ENCODE measurements at regions of chr16 and their contacts with region 1.

Region 1: GRCh38 chr16:50210266-50211038 is 55.9 kb upstream of the ADCY7 start:
- DNase-seq: peak; percentile 70
- CTCF ChIP-seq: peak; percentile 79

Region 2: GRCh38 chr16:50065624-50066481 is 144.6 kb before region 1 on chr16 and contains the start of gene HEATR3:
- CTCF ChIA-PET with region 1: interaction called, 186 read pairs
- POLR2A ChIA-PET with region 1: no interaction called
- DNase-seq: peak; percentile 94
- CTCF ChIP-seq: no peak

Region 3: DNA sequence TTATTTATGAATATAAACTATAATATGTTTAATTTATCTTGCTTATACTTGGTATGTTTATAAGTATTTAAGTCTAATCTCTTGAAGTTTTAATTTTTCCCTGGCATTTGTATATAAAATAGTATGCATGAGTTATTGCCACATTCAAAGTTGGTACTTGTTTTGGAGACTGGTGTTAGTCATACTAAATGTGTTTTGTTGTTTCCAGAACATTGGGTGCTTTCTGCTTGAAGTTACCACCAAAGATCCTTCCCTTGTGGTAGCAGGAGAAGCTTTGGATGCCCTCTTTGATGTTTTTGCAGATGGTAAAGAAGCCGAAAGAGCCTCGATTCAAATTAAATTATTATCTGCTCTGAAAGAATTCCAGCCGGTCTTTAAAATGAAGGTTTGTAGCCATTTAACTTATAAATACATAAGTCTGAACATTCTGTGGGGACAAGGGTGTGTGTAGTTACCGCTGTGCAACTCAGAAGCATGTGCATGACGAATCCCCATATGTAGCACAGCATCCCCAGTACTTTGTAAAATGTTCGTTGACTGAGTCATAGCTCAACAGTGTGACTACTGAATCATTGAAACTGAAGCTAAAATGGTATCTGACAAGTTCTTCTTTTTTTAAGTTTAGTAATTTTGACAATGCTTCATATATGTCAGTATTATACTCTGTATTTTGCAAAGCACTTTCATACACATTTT is 108.3 kb before region 1 on chr16:
- CTCF ChIA-PET with region 1: interaction called, 10 read pairs
- POLR2A ChIA-PET with region 1: no interaction called
- DNase-seq: peak; percentile 50
- CTCF ChIP-seq: no peak

Region 4: GRCh38 chr16:50136399-50136798 is 74.1 kb before region 1 on chr16:
- CTCF ChIA-PET with region 1: interaction called, 25 read pairs
- POLR2A ChIA-PET with region 1: no interaction called
- DNase-seq: no peak
- CTCF ChIP-seq: peak; percentile 31

Region 5: DNA sequence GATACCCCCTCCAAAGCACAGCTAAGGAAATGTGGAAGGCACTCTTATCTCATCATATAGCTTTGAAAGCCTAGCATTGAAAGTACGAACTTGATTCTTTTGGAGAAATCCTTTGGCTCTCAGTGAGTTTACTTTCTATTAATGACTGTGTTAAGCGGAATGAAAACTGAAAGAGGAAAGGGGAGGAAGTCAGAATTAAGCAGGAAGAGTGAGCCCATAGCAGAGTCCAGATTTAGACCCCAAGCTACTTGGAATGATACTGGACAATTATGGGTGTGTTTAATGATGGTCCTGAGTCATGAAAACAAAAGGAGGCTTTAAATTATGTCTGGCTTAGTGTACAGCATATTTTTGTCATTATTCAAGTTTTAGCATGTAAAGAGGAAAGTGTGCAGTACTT is 15.2 kb before region 1 on chr16:
- CTCF ChIA-PET with region 1: interaction called, 97 read pairs
- POLR2A ChIA-PET with region 1: no interaction called
- DNase-seq: no peak
- CTCF ChIP-seq: no peak

Region 6: GRCh38 chr16:50273681-50274325 is 63.4 kb after region 1 on chr16:
- CTCF ChIA-PET with region 1: interaction called, 20 read pairs
- POLR2A ChIA-PET with region 1: no interaction called
- DNase-seq: peak; percentile 88
- CTCF ChIP-seq: no peak

Region 7: DNA sequence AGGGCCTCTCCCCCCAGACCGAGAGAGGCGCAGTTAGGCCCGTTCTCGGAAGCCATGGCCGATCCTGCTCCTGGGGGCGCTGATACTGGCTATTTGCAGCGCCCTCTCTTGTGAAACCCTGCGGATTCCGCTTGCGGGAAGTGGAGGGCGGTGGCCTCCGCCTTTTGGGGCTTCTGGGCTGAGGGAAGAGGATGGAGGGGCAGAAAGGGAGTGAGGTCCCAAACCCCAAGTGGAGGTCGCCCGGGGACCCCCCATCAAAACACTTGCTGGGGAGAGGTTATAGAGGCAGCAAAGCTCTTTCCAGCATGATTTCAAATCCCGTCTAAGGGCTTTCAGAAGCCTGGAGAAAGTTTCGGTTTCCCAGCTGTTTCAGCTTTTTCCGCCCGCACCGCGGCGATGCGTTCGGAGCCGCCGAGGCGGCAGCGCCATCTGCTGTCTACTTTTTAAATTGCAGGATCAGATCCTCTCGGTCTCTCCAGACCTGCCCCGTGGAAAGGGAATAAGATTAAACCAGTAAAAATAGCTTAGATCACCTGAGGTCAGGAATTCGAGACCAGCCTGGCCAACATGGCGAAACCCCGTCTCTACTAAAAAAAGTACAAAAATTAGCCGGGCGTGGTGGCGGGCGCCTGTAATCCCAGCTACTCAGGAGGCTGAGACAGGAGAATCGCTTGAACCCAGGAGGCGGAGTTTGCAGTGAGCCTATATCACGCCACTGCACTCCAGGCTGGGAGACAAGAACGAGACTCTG is 454.9 kb after region 1 on chr16:
- CTCF ChIA-PET with region 1: interaction called, 37 read pairs
- POLR2A ChIA-PET with region 1: no interaction called
- DNase-seq: peak; percentile 78
- CTCF ChIP-seq: peak; percentile 75

Region 8: DNA sequence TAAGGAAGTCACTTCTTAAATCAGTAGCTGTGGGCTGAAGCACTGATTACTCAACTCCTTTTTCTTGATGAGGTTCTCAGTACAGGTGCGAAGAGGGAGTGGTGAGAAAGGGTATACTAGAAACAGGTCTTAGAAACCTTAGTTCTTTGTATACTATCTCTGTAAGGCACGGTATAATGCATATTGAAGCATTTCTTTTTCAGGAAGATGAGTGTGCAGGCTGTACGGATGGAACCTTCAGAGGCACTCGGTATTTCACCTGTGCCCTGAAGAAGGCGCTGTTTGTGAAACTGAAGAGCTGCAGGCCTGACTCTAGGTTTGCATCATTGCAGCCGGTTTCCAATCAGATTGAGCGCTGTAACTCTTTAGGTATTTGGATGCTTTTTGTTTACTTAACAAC is 570.6 kb after region 1 on chr16:
- CTCF ChIA-PET with region 1: no interaction called
- POLR2A ChIA-PET with region 1: no interaction called
- DNase-seq: no peak
- CTCF ChIP-seq: no peak